ENCODE measurements at regions of chr7 and their contacts with region 1.

Region 1: DNA sequence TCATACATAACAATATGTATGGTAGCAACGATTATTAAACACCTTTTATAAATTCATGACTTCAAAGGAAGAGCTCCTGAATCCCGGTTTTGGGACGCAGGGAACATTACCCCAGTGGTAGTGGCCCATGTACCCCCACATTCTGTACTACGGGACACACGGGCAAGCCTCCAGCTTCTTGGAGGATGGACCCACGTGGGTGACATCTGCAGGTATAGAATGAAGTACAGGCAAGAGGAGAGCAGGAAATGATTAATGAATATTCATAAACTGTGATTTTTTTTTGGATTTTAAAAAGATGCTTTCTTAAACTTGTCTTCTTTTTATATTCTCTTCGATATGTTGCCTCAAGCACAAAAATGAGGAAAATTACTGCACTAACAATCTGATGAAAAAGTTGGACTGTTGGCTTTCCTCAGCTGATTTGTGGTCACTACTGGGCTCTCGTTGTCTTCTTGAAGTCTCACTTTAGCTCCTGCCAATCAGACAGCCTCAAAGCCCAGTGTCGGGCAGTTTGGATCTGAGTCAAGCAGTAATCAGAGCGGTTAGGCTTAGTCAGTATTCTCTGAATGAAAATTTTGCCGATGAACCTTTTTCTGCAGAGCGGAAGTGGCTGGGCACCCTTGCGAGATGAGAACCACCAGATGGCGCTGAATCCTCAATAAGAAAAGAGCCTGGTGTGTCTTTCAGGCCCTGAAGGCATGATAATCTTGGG is 157.7 kb upstream of the CDCA7L start:
- DNase-seq: peak; percentile 60
- ATAC-seq: peak; percentile 80

Region 2: GRCh38 chr7:22295402-22296264 is 192.2 kb after region 1 on chr7:
- intact Hi-C with region 1: loop called (anchors 10 kb)
- DNase-seq: no peak
- ATAC-seq: no peak

Measured in Right ventricle myocardium superior (tissue), 1 donor.